Breast epithelium (tissue), 4 donors: ENCODE measurements at regions of chr6 and their contacts with region 1.

Region 1: DNA sequence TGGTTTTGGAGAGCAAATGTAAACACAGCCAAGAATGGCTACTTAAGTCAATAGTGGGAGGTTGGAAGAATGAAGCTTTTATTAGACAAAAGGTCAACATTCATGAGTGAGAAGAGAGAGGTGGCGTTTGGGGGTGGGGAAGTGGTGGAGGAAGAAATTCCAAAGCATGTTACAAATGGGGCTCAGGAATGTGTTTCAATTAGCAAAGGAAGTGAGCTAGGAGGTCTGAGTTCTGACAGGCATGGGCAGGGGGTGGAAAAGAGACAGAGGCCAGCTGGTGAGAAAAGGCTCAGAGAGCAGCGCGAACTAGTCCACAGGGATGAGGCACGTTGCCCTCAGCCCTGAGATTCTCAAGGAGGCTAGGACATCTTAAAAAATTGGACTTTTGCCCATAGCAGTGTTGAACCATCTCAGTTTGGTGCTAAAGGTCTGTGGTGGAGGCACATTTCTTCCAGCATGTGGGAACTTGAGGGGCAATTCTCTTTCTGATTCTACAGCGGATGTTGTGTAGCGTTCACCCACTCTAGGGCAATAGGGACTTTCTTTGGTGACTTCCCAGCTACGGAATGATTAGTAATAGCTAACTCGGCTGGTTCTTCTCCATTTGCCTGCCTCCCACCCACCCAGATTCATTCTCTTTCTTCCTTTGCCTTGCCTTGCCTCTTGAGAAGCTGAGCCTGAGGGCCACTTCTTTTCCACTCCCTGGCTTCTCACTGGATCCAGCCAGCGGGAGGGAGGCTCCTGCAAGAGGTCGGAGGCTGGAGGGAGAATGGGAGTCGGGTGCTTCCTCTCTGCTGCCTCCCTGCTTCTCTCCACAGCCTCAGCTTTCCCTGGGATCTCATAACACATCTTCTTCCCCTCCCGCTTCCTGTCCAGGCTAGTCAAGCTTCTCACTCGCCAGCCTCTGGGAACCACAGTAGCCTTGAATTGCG is 45.1 kb upstream of the NEDD9 start:
- DNase-seq: peak in 1 of 2 donors; percentile 40
- H3K4me3 ChIP-seq: no peak overlapping the region
- H3K27ac ChIP-seq: peak overlapping the region; percentile 0 to 45
- H3K4me1 ChIP-seq: peaks cover 0 to 10% of the 10 kb centered on the region in 2 donors
- H3K27me3 ChIP-seq: no peaks in the 10 kb centered on the region
- CTCF ChIP-seq: no peak
- POLR2A ChIP-seq: no peak

Region 2: DNA sequence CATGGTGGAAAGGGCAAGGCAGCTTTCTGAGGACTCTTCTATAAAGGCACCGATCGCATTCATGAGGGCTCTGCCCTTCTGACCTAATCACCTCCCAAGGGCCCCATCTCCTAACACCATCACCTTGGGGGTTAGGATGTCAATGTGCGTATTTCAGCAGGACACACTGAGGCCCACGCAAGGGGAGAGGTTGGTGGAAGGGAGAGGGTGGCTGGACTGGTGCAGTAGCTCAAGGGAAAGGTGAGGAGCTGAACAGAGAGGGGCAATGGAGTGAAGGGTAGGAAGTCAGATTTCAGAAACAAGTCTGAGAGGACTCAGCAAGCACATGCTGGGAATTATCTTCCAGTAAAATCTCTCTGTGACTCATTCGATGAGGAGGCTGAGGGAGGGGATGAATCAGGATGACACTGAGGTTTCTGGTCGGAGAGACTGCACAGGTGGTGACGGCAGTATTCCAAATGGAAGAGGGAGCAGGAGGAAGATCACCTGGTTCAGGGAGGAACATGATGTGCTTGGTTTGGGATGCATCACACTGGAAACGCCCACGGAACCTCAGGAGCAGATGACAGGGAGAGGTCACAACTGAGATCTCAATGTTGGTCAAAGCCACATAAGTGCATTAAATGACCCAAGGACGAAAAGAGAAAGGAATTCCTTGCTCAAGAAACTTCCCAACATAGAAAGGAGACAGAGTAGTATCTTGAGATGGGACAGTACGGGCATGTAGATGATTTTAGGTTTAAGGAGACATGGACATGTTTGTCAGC is 929.8 kb before region 1 on chr6:
- intact Hi-C with region 1: no loop called
- DNase-seq: no peak
- H3K4me3 ChIP-seq: no peak overlapping the region
- H3K27ac ChIP-seq: peak overlapping the region in 1 of 2 donors; percentile 7
- H3K4me1 ChIP-seq: no peaks in the 10 kb centered on the region
- H3K27me3 ChIP-seq: no peaks in the 10 kb centered on the region
- CTCF ChIP-seq: no peak
- POLR2A ChIP-seq: no peak

Region 3: GRCh38 chr6:11248974-11249736 is 28.4 kb before region 1 on chr6:
- intact Hi-C with region 1: loop called (anchors 1 kb)
- DNase-seq: no peak
- H3K4me3 ChIP-seq: no peak overlapping the region
- H3K27ac ChIP-seq: peak overlapping the region in 1 of 2 donors; percentile 27
- H3K4me1 ChIP-seq: peaks cover 3 to 12% of the 10 kb centered on the region in 2 donors
- H3K27me3 ChIP-seq: no peaks in the 10 kb centered on the region
- CTCF ChIP-seq: no peak
- POLR2A ChIP-seq: no peak